IMR-90 (cell line): ENCODE measurements at regions of chr4 and their contacts with region 1.

Region 1: GRCh38 chr4:74675673-74676279 is 118.5 kb downstream of the BTC start:
- DNase-seq: peak; percentile 76
- ATAC-seq: peak; percentile 93
- H3K4me3 ChIP-seq: no peak overlapping the region
- H3K27ac ChIP-seq: no peak overlapping the region
- H3K4me1 ChIP-seq: no peaks in the 10 kb centered on the region
- H3K27me3 ChIP-seq: peaks cover 1% of the 10 kb centered on the region; the same call in 1 of the 2 replicates
- CTCF ChIP-seq: peak; percentile 89
- POLR2A ChIP-seq: no peak
- RAD21 ChIP-seq: peak; percentile 97

Region 2: GRCh38 chr4:74189331-74190043 is 486.3 kb before region 1 on chr4:
- CTCF ChIA-PET with region 1: no interaction called
- POLR2A ChIA-PET with region 1: no interaction called
- dilution Hi-C with region 1: no loop called
- in situ Hi-C with region 1: loop called (anchors 10 kb)
- intact Hi-C with region 1: loop called (anchors 5 kb)
- DNase-seq: peak; percentile 55
- ATAC-seq: peak; percentile 40; the same call in 1 of the 2 replicates
- H3K4me3 ChIP-seq: no peak overlapping the region
- H3K27ac ChIP-seq: no peak overlapping the region
- H3K4me1 ChIP-seq: no peaks in the 10 kb centered on the region
- H3K27me3 ChIP-seq: no peaks in the 10 kb centered on the region
- CTCF ChIP-seq: peak; percentile 71
- POLR2A ChIP-seq: no peak
- RAD21 ChIP-seq: peak; percentile 74

Region 3: GRCh38 chr4:74370912-74371311 is 304.9 kb before region 1 on chr4:
- CTCF ChIA-PET with region 1: interaction called, 15 read pairs
- POLR2A ChIA-PET with region 1: no interaction called
- dilution Hi-C with region 1: no loop called
- in situ Hi-C with region 1: loop called (anchors 5 kb)
- intact Hi-C with region 1: loop called (anchors 1 kb)
- DNase-seq: peak; percentile 64
- ATAC-seq: peak; percentile 99
- H3K4me3 ChIP-seq: no peak overlapping the region
- H3K27ac ChIP-seq: no peak overlapping the region
- H3K4me1 ChIP-seq: no peaks in the 10 kb centered on the region
- H3K27me3 ChIP-seq: no peaks in the 10 kb centered on the region
- CTCF ChIP-seq: peak; percentile 78
- POLR2A ChIP-seq: no peak
- RAD21 ChIP-seq: peak; percentile 83

Region 4: GRCh38 chr4:74444891-74445642 is 230.7 kb before region 1 on chr4 and contains the start of gene AREG:
- CTCF ChIA-PET with region 1: no interaction called
- POLR2A ChIA-PET with region 1: no interaction called
- dilution Hi-C with region 1: no loop called
- in situ Hi-C with region 1: no loop called
- intact Hi-C with region 1: loop called (anchors 10 kb)
- DNase-seq: peak; percentile 41
- ATAC-seq: peak; percentile 90
- H3K4me3 ChIP-seq: peak within 1 kb of the TSS; percentile 90
- H3K27ac ChIP-seq: peak within 1 kb of the TSS; percentile 64; the same call in 1 of the 2 replicates
- H3K4me1 ChIP-seq: 0 out of 2 replicates have a peak, but pooled peaks cover 2% of the 10 kb centered on the region
- H3K27me3 ChIP-seq: no peaks in the 10 kb centered on the region
- CTCF ChIP-seq: peak; percentile 57
- POLR2A ChIP-seq: no peak
- RAD21 ChIP-seq: peak; percentile 49
- total RNA-seq, gene AREG: 0.18 and 0.28 TPM in 2 replicates

Region 5: GRCh38 chr4:74623041-74623440 is 52.7 kb before region 1 on chr4:
- CTCF ChIA-PET with region 1: no interaction called
- POLR2A ChIA-PET with region 1: no interaction called
- dilution Hi-C with region 1: no loop called
- in situ Hi-C with region 1: no loop called
- intact Hi-C with region 1: loop called (anchors 5 kb)
- DNase-seq: peak; percentile 24
- ATAC-seq: no peak
- H3K4me3 ChIP-seq: no peak overlapping the region
- H3K27ac ChIP-seq: no peak overlapping the region
- H3K4me1 ChIP-seq: peaks cover 15% of the 10 kb centered on the region
- H3K27me3 ChIP-seq: peaks cover 13% of the 10 kb centered on the region
- CTCF ChIP-seq: peak; percentile 34; the same call in 1 of the 2 replicates
- POLR2A ChIP-seq: no peak
- RAD21 ChIP-seq: peak; percentile 44

Region 6: GRCh38 chr4:75340561-75340960 is 664.8 kb after region 1 on chr4:
- CTCF ChIA-PET with region 1: no interaction called
- POLR2A ChIA-PET with region 1: no interaction called
- dilution Hi-C with region 1: no loop called
- in situ Hi-C with region 1: no loop called
- intact Hi-C with region 1: no loop called
- DNase-seq: no peak
- ATAC-seq: no peak
- H3K4me3 ChIP-seq: no peak overlapping the region
- H3K27ac ChIP-seq: no peak overlapping the region
- H3K4me1 ChIP-seq: peaks cover 13% of the 10 kb centered on the region
- H3K27me3 ChIP-seq: no peaks in the 10 kb centered on the region
- CTCF ChIP-seq: no peak
- POLR2A ChIP-seq: no peak
- RAD21 ChIP-seq: no peak